A673 (cell line): ENCODE measurements at regions of chr2 and their contacts with region 1.

Region 1: DNA sequence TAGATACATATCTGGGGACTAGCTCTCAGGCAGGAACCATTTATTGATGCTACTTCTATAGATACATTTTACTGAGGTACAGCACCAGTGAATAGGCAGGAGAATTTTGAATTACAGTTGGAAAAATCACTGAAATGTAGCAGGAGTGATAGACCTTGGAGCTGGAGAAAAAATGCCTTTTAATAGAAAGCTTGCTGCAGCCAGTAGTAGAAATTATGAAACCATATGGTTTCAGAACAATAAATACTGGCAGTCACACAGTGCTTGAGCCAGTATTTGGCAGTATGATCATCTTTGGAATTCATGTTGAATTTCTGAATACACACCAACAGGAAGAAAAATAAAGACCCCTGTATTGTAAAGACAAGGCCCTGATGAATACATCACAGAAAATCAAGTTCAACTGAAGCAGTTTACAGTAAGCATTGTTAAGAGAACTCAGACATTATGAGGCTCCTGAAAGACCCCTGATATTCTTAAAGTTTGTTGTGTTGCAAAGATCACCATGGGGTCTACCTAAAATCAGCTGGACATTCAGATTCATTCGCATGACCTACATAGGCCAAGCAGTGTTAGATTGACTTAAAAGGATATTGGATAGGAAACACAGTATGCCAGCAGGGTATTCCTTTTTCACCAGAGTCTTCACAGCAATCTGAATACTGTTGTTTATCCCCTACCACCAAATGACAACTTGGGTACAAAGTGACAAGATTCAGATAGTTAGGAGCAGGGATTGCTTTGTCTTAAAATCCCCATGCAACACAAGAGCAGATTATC is 139.0 kb downstream of the EHBP1 start:
- DNase-seq: no peak
- H3K4me3 ChIP-seq: no peak overlapping the region
- H3K27ac ChIP-seq: no peak overlapping the region
- H3K4me1 ChIP-seq: no peaks in the 10 kb centered on the region
- H3K27me3 ChIP-seq: no peaks in the 10 kb centered on the region
- CTCF ChIP-seq: no peak

Region 2: GRCh38 chr2:62577994-62578781 is 266.3 kb before region 1 on chr2:
- CTCF ChIA-PET with region 1: interaction called, 13 read pairs
- POLR2A ChIA-PET with region 1: no interaction called
- intact Hi-C with region 1: no loop called
- DNase-seq: no peak
- H3K4me3 ChIP-seq: no peak overlapping the region
- H3K27ac ChIP-seq: no peak overlapping the region
- H3K4me1 ChIP-seq: no peaks in the 10 kb centered on the region
- H3K27me3 ChIP-seq: peaks cover 6% of the 10 kb centered on the region
- CTCF ChIP-seq: no peak

Region 3: GRCh38 chr2:63056107-63057050 is 211.9 kb after region 1 on chr2:
- CTCF ChIA-PET with region 1: no interaction called
- POLR2A ChIA-PET with region 1: no interaction called
- intact Hi-C with region 1: no loop called
- DNase-seq: no peak
- H3K4me3 ChIP-seq: no peak overlapping the region
- H3K27ac ChIP-seq: no peak overlapping the region
- H3K4me1 ChIP-seq: peaks cover 4% of the 10 kb centered on the region
- H3K27me3 ChIP-seq: peaks cover 38% of the 10 kb centered on the region
- CTCF ChIP-seq: no peak